AG04450 (cell line): ENCODE measurements at regions of chr1 and their contacts with region 1.

Region 1: DNA sequence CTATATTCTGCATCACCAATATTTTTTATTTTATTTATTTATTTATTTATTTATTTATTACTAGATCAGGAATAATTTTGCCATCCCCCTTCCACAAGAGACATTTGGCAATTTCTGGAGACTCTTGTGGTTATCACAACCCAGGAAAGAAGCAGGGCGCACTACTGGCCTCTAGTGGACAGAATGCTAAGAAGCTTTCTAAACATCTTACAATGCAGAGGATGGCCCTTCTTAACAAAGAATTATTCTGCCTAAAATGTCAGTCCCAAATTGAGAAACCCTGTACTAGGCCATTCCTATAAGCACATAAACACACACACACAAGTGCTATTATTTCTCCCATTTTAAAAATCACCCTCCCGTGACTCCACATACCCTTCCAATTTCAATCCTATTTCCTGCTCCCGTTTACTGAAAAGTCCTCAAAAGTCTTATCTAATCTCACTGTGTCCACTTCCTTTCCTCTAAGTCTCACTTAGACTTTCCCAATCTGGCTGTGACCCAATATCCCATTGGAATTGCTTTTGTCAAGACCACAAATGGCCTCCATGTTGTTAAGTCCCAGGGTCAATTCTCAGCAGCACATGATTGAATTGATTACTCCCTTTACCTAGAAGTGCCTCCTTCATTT is 43.7 kb upstream of the RNF11 start:
- DNase-seq: peak; percentile 65
- H3K4me3 ChIP-seq: no peak overlapping the region
- H3K27ac ChIP-seq: no peak overlapping the region
- H3K27me3 ChIP-seq: no peaks in the 10 kb centered on the region
- CTCF ChIP-seq: peak; percentile 91

Region 2: GRCh38 chr1:50774759-50775351 is 417.5 kb before region 1 on chr1:
- CTCF ChIA-PET with region 1: interaction called, 181 read pairs
- POLR2A ChIA-PET with region 1: interaction called, 6 read pairs
- DNase-seq: peak; percentile 39
- H3K4me3 ChIP-seq: no peak overlapping the region
- H3K27ac ChIP-seq: no peak overlapping the region
- H3K27me3 ChIP-seq: no peaks in the 10 kb centered on the region
- CTCF ChIP-seq: peak; percentile 71

Region 3: GRCh38 chr1:50929376-50929958 is 262.9 kb before region 1 on chr1:
- CTCF ChIA-PET with region 1: interaction called, 126 read pairs
- POLR2A ChIA-PET with region 1: no interaction called
- DNase-seq: peak; percentile 6
- H3K4me3 ChIP-seq: no peak overlapping the region
- H3K27ac ChIP-seq: no peak overlapping the region
- H3K27me3 ChIP-seq: no peaks in the 10 kb centered on the region
- CTCF ChIP-seq: peak; percentile 56

Region 4: GRCh38 chr1:51203121-51203873 is 11.0 kb after region 1 on chr1:
- CTCF ChIA-PET with region 1: interaction called, 28 read pairs
- POLR2A ChIA-PET with region 1: no interaction called
- DNase-seq: no peak
- H3K4me3 ChIP-seq: no peak overlapping the region
- H3K27ac ChIP-seq: no peak overlapping the region
- H3K27me3 ChIP-seq: no peaks in the 10 kb centered on the region
- CTCF ChIP-seq: no peak

Region 5: GRCh38 chr1:51296383-51297357 is 104.3 kb after region 1 on chr1:
- CTCF ChIA-PET with region 1: interaction called, 14 read pairs
- POLR2A ChIA-PET with region 1: no interaction called
- DNase-seq: peak; percentile 32
- H3K4me3 ChIP-seq: no peak overlapping the region
- H3K27ac ChIP-seq: no peak overlapping the region
- H3K27me3 ChIP-seq: no peaks in the 10 kb centered on the region
- CTCF ChIP-seq: peak; percentile 97